ENCODE measurements at regions of chr21 and their contacts with region 1.

Region 1: DNA sequence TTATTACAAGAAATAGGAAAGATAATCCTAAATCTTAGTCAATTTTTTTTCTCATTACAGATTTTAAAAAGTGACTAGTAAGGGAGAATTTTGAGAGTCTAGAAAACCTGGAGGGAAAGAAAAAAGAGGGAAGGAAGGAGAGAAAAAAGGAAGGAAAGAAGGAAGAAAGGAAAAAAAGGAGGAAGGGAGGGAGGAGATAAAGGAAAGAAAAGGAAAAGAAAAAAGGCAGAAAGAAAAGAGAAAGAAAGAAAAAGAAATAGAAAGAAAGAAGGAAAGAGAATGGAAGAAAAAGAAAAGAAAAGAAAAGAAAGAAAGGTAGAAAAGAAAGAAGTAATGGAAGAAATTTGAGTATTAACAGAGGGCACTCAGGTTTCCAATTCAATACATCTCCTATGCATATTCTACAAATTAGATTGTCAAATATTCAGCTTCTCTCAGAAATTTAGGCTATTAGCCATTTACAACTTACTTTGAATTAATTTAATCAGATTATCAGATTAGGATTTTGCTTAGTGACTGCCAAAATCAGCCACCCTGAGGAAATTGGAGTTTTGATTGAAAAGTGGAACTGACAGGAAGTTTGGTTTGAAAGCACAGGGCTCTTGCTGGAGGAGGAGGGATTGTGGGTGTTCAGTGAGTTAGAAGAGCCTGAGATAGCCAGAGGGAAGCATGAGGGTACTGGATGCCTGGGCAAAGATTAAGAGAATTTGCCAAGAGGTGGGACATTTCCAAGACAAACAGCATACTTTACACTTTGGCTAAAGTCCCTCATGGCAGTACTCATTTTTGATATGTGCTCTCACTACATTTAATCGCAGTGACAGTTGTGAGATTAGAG is 677.8 kb downstream of the USP25 start:
- DNase-seq: no peak
- ATAC-seq: no peak
- H3K4me3 ChIP-seq: no peak overlapping the region
- H3K4me3 Mint-ChIP-seq: no peak overlapping the region
- H3K27ac ChIP-seq: no peak overlapping the region
- H3K27ac Mint-ChIP-seq: no peak overlapping the region
- H3K4me1 ChIP-seq: no peaks in the 10 kb centered on the region
- H3K4me1 Mint-ChIP-seq: no peaks in the 10 kb centered on the region
- H3K27me3 ChIP-seq: no peaks in the 10 kb centered on the region
- H3K27me3 Mint-ChIP-seq: no peaks in the 10 kb centered on the region
- CTCF ChIP-seq: peak; percentile 34

Region 2: DNA sequence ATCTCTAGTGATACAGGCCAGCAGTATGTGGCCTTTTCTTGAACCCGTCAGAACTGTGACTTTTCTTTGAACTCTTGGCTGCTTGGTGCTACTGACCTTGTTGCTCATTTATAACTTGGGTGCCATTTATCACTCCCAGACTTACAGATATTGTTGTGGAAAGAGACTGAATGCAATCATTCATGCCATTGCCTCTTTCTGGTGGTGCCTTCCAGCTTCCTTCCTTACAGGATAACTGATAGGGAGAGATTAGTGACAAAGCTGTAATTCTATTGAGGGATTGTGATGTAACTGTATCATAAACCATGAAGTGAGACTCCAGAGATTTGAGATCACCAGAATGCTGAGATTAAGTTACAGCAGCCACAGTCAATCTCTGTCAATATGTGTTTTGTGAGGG is 421.3 kb before region 1 on chr21:
- CTCF ChIA-PET with region 1: no interaction called
- POLR2A ChIA-PET with region 1: no interaction called
- intact Hi-C with region 1: no loop called
- DNase-seq: no peak
- ATAC-seq: no peak
- H3K4me3 ChIP-seq: no peak overlapping the region
- H3K4me3 Mint-ChIP-seq: no peak overlapping the region
- H3K27ac ChIP-seq: no peak overlapping the region
- H3K27ac Mint-ChIP-seq: no peak overlapping the region
- H3K4me1 ChIP-seq: no peaks in the 10 kb centered on the region
- H3K4me1 Mint-ChIP-seq: no peaks in the 10 kb centered on the region
- H3K27me3 ChIP-seq: no peaks in the 10 kb centered on the region
- H3K27me3 Mint-ChIP-seq: no peaks in the 10 kb centered on the region
- CTCF ChIP-seq: no peak

Region 3: DNA sequence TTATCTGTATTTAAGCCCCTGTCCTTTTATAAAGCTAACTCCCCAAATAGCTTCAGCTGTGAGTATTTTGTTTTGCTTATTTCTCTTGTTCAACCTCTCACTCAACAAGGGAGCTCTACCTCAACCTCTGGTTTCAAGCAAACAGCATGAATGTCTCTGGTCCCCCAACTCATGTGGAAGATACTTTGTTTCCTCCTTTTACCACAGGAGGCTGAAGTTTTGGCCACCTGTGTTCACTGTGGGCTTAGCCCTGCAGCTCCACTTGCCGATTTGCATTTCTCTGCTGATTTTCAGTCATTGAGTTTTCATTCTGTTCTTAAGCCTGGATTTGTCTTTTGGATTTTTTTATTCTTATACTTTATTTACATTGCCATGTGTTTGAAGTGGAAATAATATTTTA is 64.7 kb before region 1 on chr21:
- CTCF ChIA-PET with region 1: no interaction called
- POLR2A ChIA-PET with region 1: no interaction called
- intact Hi-C with region 1: loop called in 1 of 2 experiments (anchors 10 kb)
- DNase-seq: no peak
- ATAC-seq: no peak
- H3K4me3 ChIP-seq: no peak overlapping the region
- H3K4me3 Mint-ChIP-seq: no peak overlapping the region
- H3K27ac ChIP-seq: no peak overlapping the region
- H3K27ac Mint-ChIP-seq: no peak overlapping the region
- H3K4me1 ChIP-seq: no peaks in the 10 kb centered on the region
- H3K4me1 Mint-ChIP-seq: no peaks in the 10 kb centered on the region
- H3K27me3 ChIP-seq: no peaks in the 10 kb centered on the region
- H3K27me3 Mint-ChIP-seq: no peaks in the 10 kb centered on the region
- CTCF ChIP-seq: no peak

Measured in CD4-positive, alpha-beta T cell (primary cell).